ENCODE measurements at regions of chr2 and their contacts with region 1.

Region 1: GRCh38 chr2:26299471-26300101 is 46.4 kb upstream of the SELENOI start:
- DNase-seq: peak; percentile 30
- H3K4me3 ChIP-seq: peak overlapping the region; percentile 22 to 64 (median 36)
- H3K27ac ChIP-seq: peak overlapping the region; percentile 79 to 87 (median 86)
- H3K4me1 ChIP-seq: peaks cover 3 to 12% (median 10%) of the 10 kb centered on the region in 4 donors
- H3K27me3 ChIP-seq: no peaks in the 10 kb centered on the region
- CTCF ChIP-seq: no peak
- EP300 ChIP-seq: no peak
- POLR2A ChIP-seq: no peak

Region 2: DNA sequence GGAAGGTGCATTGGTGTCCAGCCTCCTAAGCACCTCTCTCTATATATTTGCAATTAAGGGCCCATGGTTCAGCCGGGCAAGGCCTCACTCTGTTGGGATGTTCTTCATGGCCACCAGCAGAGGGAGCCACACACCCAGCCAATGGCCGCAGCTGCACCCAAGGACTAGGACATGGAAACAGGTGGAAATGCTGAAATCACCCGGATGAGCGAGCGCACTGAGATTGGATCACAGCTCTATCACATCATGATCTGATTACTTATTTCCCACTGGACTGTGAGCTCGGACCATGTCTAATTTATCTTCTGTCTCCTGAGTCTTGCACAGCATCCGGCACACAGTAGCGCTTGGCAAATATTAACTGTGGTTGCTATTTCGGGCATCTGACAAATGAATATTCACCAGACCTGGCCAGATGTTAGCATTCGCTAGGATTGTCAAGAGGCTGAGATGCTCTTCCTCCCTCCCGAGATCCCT is 348.5 kb before region 1 on chr2:
- in situ Hi-C with region 1: loop called in 1 of 4 experiments (anchors 25 kb)
- intact Hi-C with region 1: no loop called
- DNase-seq: peak; percentile 84
- H3K4me3 ChIP-seq: no peak overlapping the region
- H3K27ac ChIP-seq: no peak overlapping the region
- H3K4me1 ChIP-seq: no peaks in the 10 kb centered on the region
- H3K27me3 ChIP-seq: no peaks in the 10 kb centered on the region
- CTCF ChIP-seq: peak; percentile 89 to 96 (median 91)
- EP300 ChIP-seq: no peak
- POLR2A ChIP-seq: no peak

Region 3: DNA sequence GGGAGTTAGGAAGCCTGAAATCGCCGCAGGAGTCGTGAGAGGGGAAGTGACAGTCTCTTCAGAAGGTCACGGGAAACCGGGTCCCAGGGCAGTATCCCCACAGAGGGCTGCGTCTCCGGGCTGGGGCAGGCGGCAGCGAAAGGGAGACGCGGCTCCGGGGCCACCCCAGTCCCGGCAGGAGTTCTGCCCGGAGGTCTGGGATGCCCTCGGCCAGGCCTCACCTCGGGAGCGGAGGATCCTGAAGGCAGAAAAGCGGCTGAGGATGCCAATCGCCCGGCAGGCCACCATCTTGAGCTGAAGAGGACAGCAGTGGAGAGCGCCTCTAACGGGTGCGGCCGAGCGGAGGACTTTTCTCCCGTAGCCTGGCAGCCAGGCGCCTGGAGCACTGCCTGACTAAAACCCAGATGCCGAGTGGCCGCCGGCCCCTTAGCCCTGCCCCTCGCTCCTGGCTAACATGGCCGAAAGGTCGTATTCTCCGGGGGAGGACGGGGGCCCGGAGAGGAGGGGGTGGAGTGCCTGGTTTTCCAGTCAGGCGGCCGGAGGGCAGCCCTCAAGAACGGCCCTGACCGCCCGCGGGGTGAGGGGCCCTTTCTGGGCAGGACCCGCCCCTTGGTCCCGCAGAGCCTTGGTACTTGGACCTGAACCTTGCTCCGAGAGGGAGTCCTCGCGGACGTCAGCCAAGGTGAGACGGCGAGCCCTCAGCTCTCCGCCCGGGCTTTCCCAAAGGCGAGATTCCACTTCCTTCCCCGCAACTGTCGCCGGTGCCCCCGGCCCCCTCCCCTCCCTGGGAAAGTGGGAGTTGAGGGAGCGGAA is 55.1 kb before region 1 on chr2 and contains the starts of genes HADHA and HADHB:
- in situ Hi-C with region 1: no loop called
- intact Hi-C with region 1: loop called (anchors 2 kb)
- DNase-seq: peak; percentile 94
- H3K4me3 ChIP-seq: peak within 1 kb of the TSS; percentile 73 to 90 (median 78)
- H3K27ac ChIP-seq: peak within 1 kb of the TSS; percentile 86 to 97 (median 92)
- H3K4me1 ChIP-seq: peaks cover 21 to 69% (median 49%) of the 10 kb centered on the region in 4 donors
- H3K27me3 ChIP-seq: no peaks in the 10 kb centered on the region
- CTCF ChIP-seq: peak in 3 of 5 experiments; percentile 16 to 53 (median 46)
- EP300 ChIP-seq: peak; percentile 29
- POLR2A ChIP-seq: peak; percentile 91
- total RNA-seq, gene HADHA: 92.8 to 233 (median 142) TPM
- total RNA-seq, gene HADHB: 53.1 to 182 (median 133) TPM